CD8-positive, alpha-beta T cell (primary cell): ENCODE measurements at regions of chr16 and their contacts with region 1.

Region 1: DNA sequence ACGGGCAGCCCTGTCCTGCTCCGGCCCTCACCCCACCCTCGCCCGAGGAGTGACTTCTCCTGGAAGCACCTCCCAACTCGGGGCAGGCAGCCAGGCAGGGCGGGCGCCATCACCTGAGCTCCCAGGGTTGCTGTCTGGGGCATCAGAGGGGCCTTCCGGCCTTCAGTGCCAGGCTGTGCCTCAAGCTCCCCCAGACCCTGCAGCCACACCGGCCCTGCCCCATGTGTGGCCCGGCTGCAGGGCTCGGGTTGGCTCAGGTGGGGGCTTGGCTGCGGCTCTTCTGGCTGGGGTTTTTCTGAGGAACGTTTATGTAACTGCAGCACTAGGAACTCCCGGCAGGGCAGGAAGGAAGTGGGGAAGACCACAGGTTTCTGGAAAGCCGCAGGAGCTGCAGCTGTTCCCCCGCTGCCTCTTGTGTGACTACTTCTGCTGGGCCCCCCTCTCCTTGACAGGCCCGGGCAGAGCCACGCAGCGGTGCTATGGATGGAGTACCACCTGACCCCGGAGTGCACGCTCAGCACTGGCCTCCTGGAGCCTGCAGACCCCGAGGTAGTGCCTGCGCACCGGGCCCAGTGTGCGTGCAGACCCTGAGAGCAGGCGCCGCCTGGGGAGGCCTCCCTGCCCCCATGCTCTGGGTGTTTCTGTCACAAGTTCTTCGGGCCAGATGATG is 45.6 kb downstream of the PRMT7 start:
- DNase-seq: peak; percentile 25 to 89 (median 71)
- ATAC-seq: peak; percentile 85
- H3K4me3 ChIP-seq: peak overlapping the region; percentile 35 to 59
- H3K4me3 Mint-ChIP-seq: peak overlapping the region; percentile 81
- H3K27ac ChIP-seq: no peak overlapping the region
- H3K27ac Mint-ChIP-seq: no peak overlapping the region
- H3K4me1 ChIP-seq: peaks cover 38% of the 10 kb centered on the region
- H3K4me1 Mint-ChIP-seq: peaks cover 35% of the 10 kb centered on the region
- H3K27me3 ChIP-seq: no peaks in the 10 kb centered on the region
- H3K27me3 Mint-ChIP-seq: no peaks in the 10 kb centered on the region
- CTCF ChIP-seq: no peak

Region 2: GRCh38 chr16:68369697-68370580 is 13.6 kb after region 1 on chr16:
- CTCF ChIA-PET with region 1: interaction called, 17 read pairs
- POLR2A ChIA-PET with region 1: interaction called, 11 read pairs
- intact Hi-C with region 1: no loop called
- DNase-seq: peak in 4 of 9 experiments; percentile 29 to 62 (median 45)
- ATAC-seq: peak; percentile 30
- H3K4me3 ChIP-seq: no peak overlapping the region
- H3K4me3 Mint-ChIP-seq: peak overlapping the region; percentile 49
- H3K27ac ChIP-seq: no peak overlapping the region
- H3K27ac Mint-ChIP-seq: peak overlapping the region; percentile 32
- H3K4me1 ChIP-seq: peaks cover 56% of the 10 kb centered on the region
- H3K4me1 Mint-ChIP-seq: peaks cover 49% of the 10 kb centered on the region
- H3K27me3 ChIP-seq: no peaks in the 10 kb centered on the region
- H3K27me3 Mint-ChIP-seq: peaks cover 2% of the 10 kb centered on the region
- CTCF ChIP-seq: no peak

Region 3: DNA sequence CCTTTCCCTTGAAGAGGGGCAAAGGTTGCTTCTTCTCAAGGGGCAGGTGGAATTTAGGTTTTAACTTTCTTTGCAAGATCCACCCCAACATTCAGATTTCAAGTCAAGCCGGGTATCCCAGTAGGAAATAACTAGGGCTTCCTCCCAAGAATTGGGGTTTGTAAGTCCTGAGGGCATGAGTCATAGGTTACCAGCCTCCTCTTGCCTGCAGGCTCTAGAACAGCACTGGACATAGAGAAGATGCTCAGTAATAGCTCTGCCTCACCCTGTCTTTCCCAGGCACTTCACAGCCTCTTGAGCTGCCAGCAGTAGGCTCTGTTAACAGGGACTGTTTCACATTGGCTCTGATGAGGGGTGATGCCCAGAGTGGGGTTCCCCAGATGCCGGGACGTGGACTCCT is 146.9 kb after region 1 on chr16:
- CTCF ChIA-PET with region 1: no interaction called
- POLR2A ChIA-PET with region 1: no interaction called
- intact Hi-C with region 1: no loop called
- DNase-seq: no peak
- ATAC-seq: no peak
- H3K4me3 ChIP-seq: no peak overlapping the region
- H3K4me3 Mint-ChIP-seq: no peak overlapping the region
- H3K27ac ChIP-seq: no peak overlapping the region
- H3K27ac Mint-ChIP-seq: no peak overlapping the region
- H3K4me1 ChIP-seq: no peaks in the 10 kb centered on the region
- H3K4me1 Mint-ChIP-seq: peaks cover 5% of the 10 kb centered on the region
- H3K27me3 ChIP-seq: no peaks in the 10 kb centered on the region
- H3K27me3 Mint-ChIP-seq: no peaks in the 10 kb centered on the region
- CTCF ChIP-seq: no peak